Activated B cell treated with CpG ODN at 0.5 μM for 24 hours (primary cell): ENCODE measurements at regions of chr15 and their contacts with region 1.

Region 1: DNA sequence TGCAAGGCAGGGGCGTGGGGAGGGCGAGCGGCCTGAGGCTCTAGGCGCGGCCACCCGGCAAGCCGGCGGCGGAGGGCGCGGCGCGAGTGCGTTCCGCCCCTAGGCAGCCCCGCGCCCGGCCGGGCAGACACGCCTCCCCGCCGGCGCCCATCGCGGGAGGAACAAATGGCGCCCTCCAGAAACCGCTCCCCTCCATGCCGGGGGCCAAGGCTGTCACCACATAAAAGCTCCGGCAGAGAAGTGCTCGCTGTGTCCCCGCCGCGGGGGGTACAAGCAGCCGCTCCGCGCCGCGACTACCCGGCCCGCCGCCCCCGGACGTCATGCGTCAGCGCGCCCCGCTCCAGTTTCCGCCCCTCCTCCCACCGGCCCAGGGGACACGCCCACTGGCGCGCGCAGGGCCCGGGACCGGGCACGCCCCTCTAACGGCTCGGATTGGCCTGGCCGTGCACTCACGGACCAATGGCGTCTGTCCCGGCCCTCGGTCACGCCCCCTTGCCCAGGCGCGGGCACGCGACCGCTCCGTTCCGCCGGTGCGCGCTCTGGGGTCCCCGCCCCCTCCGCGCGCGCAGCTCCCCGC is 391 bp upstream of the KLF13 start:
- DNase-seq: peak; percentile 100
- ATAC-seq: peak; percentile 73
- H3K4me3 Mint-ChIP-seq: peak overlapping the region; percentile 93
- H3K27ac Mint-ChIP-seq: peak overlapping the region; percentile 86
- H3K4me1 Mint-ChIP-seq: peaks cover 62% of the 10 kb centered on the region
- H3K27me3 Mint-ChIP-seq: no peaks in the 10 kb centered on the region
- CTCF ChIP-seq: no peak

Region 2: DNA sequence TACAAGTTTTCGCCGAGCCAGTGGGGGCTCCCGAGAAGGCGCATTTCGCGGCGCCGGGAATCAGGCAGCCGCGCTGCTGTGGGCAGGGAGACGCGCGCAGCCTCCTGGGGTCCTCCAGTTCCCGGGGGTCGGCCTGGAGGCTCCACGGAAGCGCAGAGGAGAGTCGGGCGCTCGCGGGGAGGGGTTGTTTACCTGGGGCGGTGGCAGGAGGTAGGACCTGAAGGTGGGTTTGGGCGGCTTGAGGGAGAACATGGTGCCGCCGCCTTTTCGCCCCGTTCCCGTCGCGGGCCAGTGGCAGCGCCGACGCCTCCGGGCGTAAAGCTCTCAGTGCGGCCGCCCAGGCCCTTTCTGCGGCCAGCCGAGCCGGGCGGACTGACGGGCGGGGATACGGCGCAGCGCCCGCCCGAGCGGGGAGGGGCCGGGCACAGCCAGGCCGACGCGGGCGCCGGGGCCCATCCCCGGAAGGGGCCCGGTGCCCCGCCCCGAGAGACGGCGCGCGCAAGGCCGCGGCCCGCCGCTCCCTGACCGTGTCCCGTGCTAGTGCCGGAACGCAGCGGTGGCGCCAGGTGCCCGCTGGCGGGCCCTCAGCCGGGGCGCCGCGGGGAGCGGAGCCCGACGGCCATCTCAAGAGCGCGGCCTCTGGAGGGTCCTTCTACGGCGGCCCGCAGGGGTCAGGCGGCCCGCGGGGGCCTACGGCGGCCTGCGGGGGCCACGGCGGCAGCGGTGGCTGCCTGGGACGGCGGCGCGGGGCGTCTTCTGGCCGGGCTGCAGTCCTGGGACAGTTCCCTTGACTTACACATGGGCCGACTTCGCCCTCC is 334.8 kb before region 1 on chr15 and contains the start of gene MTMR10:
- CTCF ChIA-PET with region 1: no interaction called
- POLR2A ChIA-PET with region 1: interaction called, 4 read pairs
- intact Hi-C with region 1: loop called (anchors 1 kb)
- DNase-seq: peak; percentile 89
- ATAC-seq: peak; percentile 92
- H3K4me3 Mint-ChIP-seq: peak within 1 kb of the TSS; percentile 94
- H3K27ac Mint-ChIP-seq: peak within 1 kb of the TSS; percentile 94
- H3K4me1 Mint-ChIP-seq: peaks cover 34% of the 10 kb centered on the region
- H3K27me3 Mint-ChIP-seq: no peaks in the 10 kb centered on the region
- CTCF ChIP-seq: no peak
- total RNA-seq, gene MTMR10: 39.3 and 42.5 TPM in 2 replicates

Region 3: DNA sequence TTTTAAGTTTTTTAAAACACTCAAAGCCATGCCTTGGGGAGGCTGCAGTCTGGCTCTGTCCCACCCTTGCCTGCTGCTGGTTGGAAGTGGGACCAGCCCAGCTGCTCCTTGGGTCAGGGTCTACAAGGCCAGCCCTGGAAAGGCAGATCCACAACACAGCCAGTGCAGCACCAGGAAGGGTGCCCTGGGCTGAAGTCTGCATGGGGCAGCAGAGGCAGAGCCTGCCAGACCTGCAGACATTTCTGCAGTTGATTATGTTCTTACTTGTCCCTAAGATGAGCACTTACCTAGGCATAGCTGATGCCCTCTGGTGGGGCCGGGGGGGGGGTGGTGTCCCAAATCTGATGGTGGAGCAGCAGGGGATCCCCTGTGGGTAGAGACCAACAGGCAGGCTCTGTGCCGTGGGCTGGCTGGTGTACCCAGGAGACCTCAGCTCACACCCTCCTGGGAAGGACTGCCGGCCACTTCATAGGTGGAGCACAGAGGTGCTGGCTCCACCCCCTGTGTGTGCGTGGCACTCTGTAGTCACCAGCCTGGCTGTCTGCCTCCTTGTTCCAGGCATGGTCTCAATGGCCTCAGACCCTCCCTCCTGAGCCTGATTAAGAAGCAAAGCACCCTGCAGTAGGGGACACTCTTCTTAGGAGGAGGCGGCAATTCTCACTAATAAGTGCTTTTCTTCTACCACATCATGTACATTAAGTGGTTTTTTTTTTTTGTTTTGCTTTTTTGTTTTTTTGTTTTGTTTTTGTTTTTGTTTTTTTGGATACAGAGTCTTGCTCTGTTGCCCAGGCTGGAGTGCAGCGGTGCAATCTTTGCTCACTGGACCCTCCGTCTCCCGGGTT is 97.0 kb before region 1 on chr15:
- CTCF ChIA-PET with region 1: interaction called, 5 read pairs
- POLR2A ChIA-PET with region 1: interaction called, 204 read pairs
- intact Hi-C with region 1: loop called (anchors 1 kb)
- DNase-seq: peak; percentile 52
- ATAC-seq: peak; percentile 64
- H3K4me3 Mint-ChIP-seq: peak overlapping the region; percentile 85
- H3K27ac Mint-ChIP-seq: peak overlapping the region; percentile 98
- H3K4me1 Mint-ChIP-seq: peaks cover 96% of the 10 kb centered on the region
- H3K27me3 Mint-ChIP-seq: no peaks in the 10 kb centered on the region
- CTCF ChIP-seq: no peak

Region 4: GRCh38 chr15:31279221-31280045 is 46.8 kb before region 1 on chr15:
- CTCF ChIA-PET with region 1: no interaction called
- POLR2A ChIA-PET with region 1: no interaction called
- intact Hi-C with region 1: no loop called
- DNase-seq: no peak
- ATAC-seq: no peak
- H3K4me3 Mint-ChIP-seq: no peak overlapping the region
- H3K27ac Mint-ChIP-seq: no peak overlapping the region
- H3K4me1 Mint-ChIP-seq: peaks cover 8% of the 10 kb centered on the region
- H3K27me3 Mint-ChIP-seq: no peaks in the 10 kb centered on the region
- CTCF ChIP-seq: no peak

Region 5: GRCh38 chr15:31338879-31339557 is 12.8 kb after region 1 on chr15:
- CTCF ChIA-PET with region 1: interaction called, 3 read pairs
- POLR2A ChIA-PET with region 1: interaction called, 94 read pairs
- intact Hi-C with region 1: loop called (anchors 1 kb)
- DNase-seq: peak; percentile 40
- ATAC-seq: peak; percentile 50
- H3K4me3 Mint-ChIP-seq: peak overlapping the region; percentile 44
- H3K27ac Mint-ChIP-seq: peak overlapping the region; percentile 76
- H3K4me1 Mint-ChIP-seq: peaks cover 99% of the 10 kb centered on the region
- H3K27me3 Mint-ChIP-seq: no peaks in the 10 kb centered on the region
- CTCF ChIP-seq: no peak

Region 6: GRCh38 chr15:31391687-31392671 is 65.7 kb after region 1 on chr15:
- CTCF ChIA-PET with region 1: no interaction called
- POLR2A ChIA-PET with region 1: interaction called, 16 read pairs
- intact Hi-C with region 1: loop called (anchors 1 kb)
- DNase-seq: peak; percentile 78
- ATAC-seq: peak; percentile 91
- H3K4me3 Mint-ChIP-seq: peak overlapping the region; percentile 87
- H3K27ac Mint-ChIP-seq: peak overlapping the region; percentile 35
- H3K4me1 Mint-ChIP-seq: peaks cover 13% of the 10 kb centered on the region
- H3K27me3 Mint-ChIP-seq: no peaks in the 10 kb centered on the region
- CTCF ChIP-seq: no peak

Region 7: DNA sequence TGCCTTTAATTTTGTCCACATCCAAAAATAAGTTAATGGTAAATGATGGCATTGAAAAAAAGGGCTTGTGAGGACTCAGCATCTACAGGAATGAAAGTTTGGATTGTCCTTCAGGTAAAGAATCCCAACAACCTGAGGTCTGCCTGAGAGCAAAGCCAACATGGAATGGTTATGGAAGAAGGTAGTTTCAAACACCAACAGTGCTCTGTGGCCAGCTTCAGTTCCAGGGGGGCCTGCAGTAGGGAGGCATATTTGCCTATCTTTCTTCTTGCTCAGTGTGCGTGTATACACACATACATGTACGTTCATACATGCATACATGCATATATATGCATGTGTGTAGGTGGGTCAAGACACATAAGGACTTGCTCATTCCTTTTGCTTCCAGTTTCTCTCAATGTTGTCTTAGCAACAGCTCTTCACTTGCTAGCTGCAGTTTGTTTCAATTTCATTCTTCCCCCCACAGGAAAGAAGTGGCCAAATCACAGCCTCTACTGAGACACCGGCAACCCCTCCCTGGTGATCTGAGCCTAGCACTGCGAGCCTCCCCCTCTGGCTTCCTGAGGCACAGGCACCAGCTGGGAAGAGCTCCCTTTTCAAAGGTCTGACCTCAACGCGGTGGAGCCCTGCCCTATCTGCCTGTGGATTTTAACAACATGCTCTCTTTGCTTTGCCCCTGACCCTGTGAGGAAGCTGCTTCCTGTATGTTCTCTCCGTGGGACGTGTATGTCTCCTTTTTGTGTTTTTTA is 146.6 kb after region 1 on chr15:
- CTCF ChIA-PET with region 1: no interaction called
- POLR2A ChIA-PET with region 1: interaction called, 9 read pairs
- intact Hi-C with region 1: loop called (anchors 5 kb)
- DNase-seq: no peak
- ATAC-seq: peak; percentile 80
- H3K4me3 Mint-ChIP-seq: peak overlapping the region; percentile 80
- H3K27ac Mint-ChIP-seq: peak overlapping the region; percentile 93
- H3K4me1 Mint-ChIP-seq: peaks cover 45% of the 10 kb centered on the region
- H3K27me3 Mint-ChIP-seq: no peaks in the 10 kb centered on the region
- CTCF ChIP-seq: no peak

Region 8: GRCh38 chr15:32981536-32981935 is 1655.3 kb after region 1 on chr15:
- CTCF ChIA-PET with region 1: no interaction called
- POLR2A ChIA-PET with region 1: no interaction called
- intact Hi-C with region 1: no loop called
- DNase-seq: no peak
- ATAC-seq: no peak
- H3K4me3 Mint-ChIP-seq: no peak overlapping the region
- H3K27ac Mint-ChIP-seq: no peak overlapping the region
- H3K4me1 Mint-ChIP-seq: no peaks in the 10 kb centered on the region
- H3K27me3 Mint-ChIP-seq: peaks cover 15% of the 10 kb centered on the region
- CTCF ChIP-seq: no peak